ENCODE measurements at regions of chr16 and their contacts with region 1.

Region 1: DNA sequence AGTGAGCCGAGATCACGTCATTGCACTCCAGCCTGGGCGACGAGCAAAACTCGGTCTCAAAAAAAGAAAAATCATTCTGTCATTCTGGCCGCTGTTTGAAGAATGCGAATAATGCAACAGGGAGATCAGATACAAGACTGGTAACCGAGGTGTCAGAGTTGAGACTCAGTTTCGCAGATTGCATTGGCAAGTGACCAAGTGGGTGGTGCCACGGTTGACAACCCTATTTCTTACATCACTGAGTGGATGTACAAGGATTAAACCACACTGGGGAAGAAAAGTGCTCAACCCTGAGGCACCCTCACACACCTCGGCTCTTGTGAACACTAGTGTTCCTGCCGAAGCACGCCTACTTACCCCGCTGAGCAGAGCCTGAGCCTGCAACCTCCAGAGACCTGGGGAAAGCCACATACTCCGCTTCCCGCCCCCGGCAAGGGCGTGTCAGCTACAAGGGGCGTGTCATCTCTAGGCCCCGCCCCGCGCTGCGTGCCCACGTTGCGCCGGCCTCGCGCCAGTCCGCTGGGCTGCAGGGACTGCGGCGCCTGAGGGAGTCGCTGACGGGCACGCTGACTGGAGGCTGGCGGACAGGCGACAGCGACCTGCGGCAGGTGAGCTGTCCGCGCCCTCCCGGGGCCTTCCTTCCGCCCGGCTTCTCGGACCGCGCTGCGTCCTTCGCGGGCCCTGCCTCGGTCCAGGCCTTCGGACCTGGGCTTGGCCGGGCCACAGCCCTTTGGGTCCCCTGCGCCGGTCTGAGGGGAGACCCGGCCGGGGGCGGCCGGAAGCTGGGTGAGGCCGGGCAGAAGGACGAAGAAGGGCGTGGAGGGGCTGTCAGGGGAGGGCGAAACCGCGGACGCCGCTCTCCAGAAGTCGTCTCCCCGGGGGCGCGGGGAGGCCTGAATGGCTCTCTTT is at the start of gene HMOX2:
- DNase-seq: peak; percentile 96
- ATAC-seq: peak; percentile 85
- H3K4me3 Mint-ChIP-seq: peak within 1 kb of the TSS; percentile 88
- H3K27ac Mint-ChIP-seq: peak within 1 kb of the TSS; percentile 85
- H3K4me1 Mint-ChIP-seq: peaks cover 43% of the 10 kb centered on the region
- H3K27me3 Mint-ChIP-seq: no peaks in the 10 kb centered on the region
- total RNA-seq, gene HMOX2: 67.7 to 80.2 TPM

Region 2: DNA sequence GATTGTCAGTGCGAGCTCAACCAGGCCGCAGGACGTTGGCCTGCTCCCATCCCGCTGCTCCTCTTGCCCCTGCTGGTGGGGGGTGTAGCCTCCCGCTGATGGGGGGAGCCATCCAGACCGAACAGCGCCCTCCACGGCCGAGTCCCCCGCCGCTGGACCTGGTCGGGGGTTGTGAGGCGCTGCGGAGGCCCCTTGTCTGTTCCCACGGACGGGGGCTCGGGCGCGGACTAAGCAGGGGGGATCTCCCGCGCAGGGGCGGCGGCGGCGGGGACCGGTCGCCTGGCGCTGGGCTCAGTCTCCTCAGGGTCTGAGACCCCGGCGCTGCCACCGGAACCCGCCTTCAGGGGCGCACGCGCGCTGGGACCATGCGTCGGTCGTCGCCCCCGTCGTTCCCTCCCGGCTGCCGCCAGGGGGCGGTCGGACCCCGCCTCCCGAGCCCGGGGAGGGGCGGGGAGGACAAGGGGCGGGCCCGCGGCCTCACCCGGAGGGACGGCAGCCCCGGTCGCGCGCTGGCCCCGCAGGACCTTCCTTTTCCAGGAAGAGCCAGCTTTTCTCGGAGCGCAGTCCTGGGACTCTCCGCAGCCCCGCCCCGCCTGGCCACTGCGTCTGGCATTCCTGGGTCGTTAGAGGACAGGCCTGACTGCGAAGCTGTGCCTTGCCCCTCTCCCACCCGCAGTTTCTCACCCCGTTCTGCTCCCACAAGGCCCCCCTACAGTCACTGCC is 1417.0 kb before region 1 on chr16:
- CTCF ChIA-PET with region 1: no interaction called
- POLR2A ChIA-PET with region 1: no interaction called
- intact Hi-C with region 1: no loop called
- DNase-seq: peak; percentile 93
- ATAC-seq: peak; percentile 83
- H3K4me3 Mint-ChIP-seq: peak overlapping the region; percentile 84
- H3K27ac Mint-ChIP-seq: peak overlapping the region; percentile 93
- H3K4me1 Mint-ChIP-seq: peaks cover 62% of the 10 kb centered on the region
- H3K27me3 Mint-ChIP-seq: no peaks in the 10 kb centered on the region

Region 3: DNA sequence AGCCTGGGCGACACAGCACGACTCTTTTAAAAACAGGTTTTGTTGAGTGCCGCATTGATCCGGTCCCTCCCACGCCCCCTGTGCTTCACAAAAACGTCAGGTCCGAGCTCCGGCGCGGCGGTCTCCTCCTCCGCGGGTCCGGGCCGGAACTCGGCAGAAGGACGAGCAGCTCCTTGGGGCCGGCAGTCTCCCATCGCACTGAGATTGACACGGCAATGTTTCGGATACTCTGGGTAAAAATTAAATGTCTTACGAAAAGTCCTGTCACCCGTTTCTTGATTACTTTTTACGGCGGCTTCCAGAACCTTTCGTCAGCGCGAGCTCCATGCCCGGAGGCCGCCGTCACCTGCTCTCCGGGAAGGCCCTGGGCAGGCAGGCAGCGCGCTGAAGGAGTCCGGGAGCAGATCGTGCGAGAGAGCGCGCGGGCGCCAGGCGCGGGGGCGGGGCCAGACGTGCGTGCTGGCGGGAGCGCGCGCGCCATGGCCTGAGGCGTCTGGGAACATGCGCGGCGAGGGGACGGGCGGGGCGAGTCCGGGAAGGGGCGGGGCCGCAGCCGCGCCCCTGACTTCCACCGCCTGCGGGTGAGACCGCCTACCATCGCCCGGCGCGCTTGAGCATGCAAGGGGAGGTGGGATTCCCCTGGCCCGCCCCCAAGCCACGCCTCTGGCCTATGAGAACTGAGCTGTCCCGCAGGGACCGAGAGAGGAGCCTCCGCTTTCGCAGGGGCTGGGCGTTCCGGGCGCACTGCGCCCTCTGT is 222.6 kb before region 1 on chr16:
- CTCF ChIA-PET with region 1: interaction called, 3 read pairs
- POLR2A ChIA-PET with region 1: no interaction called
- intact Hi-C with region 1: loop called in 1 of 2 experiments (anchors 2 kb)
- DNase-seq: peak; percentile 100
- ATAC-seq: peak; percentile 98
- H3K4me3 Mint-ChIP-seq: peak overlapping the region; percentile 92
- H3K27ac Mint-ChIP-seq: peak overlapping the region; percentile 96
- H3K4me1 Mint-ChIP-seq: peaks cover 3% of the 10 kb centered on the region
- H3K27me3 Mint-ChIP-seq: no peaks in the 10 kb centered on the region

Region 4: GRCh38 chr16:4339909-4340308 is 136.2 kb before region 1 on chr16:
- CTCF ChIA-PET with region 1: no interaction called
- POLR2A ChIA-PET with region 1: no interaction called
- intact Hi-C with region 1: no loop called
- DNase-seq: no peak
- ATAC-seq: no peak
- H3K4me3 Mint-ChIP-seq: no peak overlapping the region
- H3K27ac Mint-ChIP-seq: no peak overlapping the region
- H3K4me1 Mint-ChIP-seq: no peaks in the 10 kb centered on the region
- H3K27me3 Mint-ChIP-seq: no peaks in the 10 kb centered on the region

Region 5: GRCh38 chr16:4416200-4417032 is 59.7 kb before region 1 on chr16 and contains the start of gene CORO7:
- CTCF ChIA-PET with region 1: interaction called, 6 read pairs
- POLR2A ChIA-PET with region 1: interaction called, 6 read pairs
- intact Hi-C with region 1: loop called (anchors 1 to 2 kb)
- DNase-seq: peak; percentile 98
- ATAC-seq: peak; percentile 81
- H3K4me3 Mint-ChIP-seq: peak within 1 kb of the TSS; percentile 86
- H3K27ac Mint-ChIP-seq: peak within 1 kb of the TSS; percentile 84
- H3K4me1 Mint-ChIP-seq: peaks cover 29% of the 10 kb centered on the region
- H3K27me3 Mint-ChIP-seq: no peaks in the 10 kb centered on the region
- total RNA-seq, gene CORO7: 65.0 to 67.1 TPM

Region 6: DNA sequence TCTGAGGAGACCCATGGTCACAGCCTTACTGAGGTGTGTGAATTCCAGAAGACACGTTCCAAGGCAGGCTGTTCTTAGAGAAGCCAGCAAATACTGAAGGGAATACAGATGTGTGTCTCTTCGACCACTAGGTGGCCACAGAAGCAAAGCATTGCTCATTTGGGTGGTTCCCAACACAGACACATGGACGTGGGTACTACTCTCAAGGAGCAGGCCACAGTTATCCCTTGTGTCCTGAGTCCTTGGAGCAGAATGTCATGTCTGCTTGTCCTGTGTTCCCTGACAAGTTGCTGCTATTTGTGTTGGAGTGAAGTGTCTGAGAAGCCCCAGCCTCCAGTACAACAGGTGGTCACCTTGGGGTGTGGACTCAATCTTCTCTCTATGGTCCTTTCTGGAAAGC is 30.3 kb after region 1 on chr16:
- CTCF ChIA-PET with region 1: interaction called, 19 read pairs
- POLR2A ChIA-PET with region 1: interaction called, 5 read pairs
- intact Hi-C with region 1: no loop called
- DNase-seq: peak; percentile 75
- ATAC-seq: peak; percentile 72
- H3K4me3 Mint-ChIP-seq: no peak overlapping the region
- H3K27ac Mint-ChIP-seq: peak overlapping the region; percentile 81
- H3K4me1 Mint-ChIP-seq: peaks cover 48% of the 10 kb centered on the region
- H3K27me3 Mint-ChIP-seq: no peaks in the 10 kb centered on the region

Region 7: GRCh38 chr16:4616047-4616811 is 140.1 kb after region 1 on chr16:
- CTCF ChIA-PET with region 1: interaction called, 3 read pairs
- POLR2A ChIA-PET with region 1: interaction called, 3 read pairs
- intact Hi-C with region 1: loop called in 1 of 2 experiments (anchors 1 kb)
- DNase-seq: peak; percentile 100
- ATAC-seq: peak; percentile 89
- H3K4me3 Mint-ChIP-seq: peak overlapping the region; percentile 86
- H3K27ac Mint-ChIP-seq: peak overlapping the region; percentile 95
- H3K4me1 Mint-ChIP-seq: peaks cover 17% of the 10 kb centered on the region
- H3K27me3 Mint-ChIP-seq: no peaks in the 10 kb centered on the region

Region 8: DNA sequence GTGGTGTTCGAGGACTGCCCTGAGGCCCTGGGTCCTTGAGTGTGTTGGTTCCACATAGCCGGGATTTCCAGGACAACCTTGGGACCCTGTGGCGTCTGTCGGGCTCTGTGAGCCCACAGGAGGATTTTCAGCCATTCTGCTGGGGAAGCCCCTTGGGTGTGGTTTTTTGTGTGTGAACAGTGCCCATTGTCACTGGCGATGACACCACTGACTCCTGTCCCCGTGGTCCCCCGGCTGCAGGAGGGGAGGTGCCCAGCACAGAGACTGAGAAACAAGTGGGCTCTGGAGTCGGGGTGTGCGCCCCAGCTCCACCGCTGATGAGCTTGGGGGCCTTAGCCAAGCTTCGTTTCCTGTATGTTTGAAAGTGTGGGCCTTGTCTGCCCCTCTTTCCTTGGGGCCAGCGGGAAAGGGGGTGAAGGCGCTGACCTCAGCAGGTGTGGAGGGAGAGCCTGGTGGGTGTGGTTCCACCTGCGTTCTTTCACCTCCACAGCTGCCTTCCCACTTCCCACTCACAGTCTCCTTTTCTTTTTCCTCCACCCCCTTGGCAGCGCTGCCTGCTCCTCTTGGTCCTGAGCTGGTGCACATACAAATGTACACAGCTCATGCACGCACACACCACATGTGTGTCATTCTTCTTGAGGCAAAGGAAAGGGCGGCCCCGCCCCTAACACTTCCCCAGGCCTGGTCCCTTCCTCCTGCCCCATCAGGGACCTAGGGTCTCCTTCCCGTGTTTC is 164.6 kb after region 1 on chr16:
- CTCF ChIA-PET with region 1: no interaction called
- POLR2A ChIA-PET with region 1: no interaction called
- intact Hi-C with region 1: no loop called
- DNase-seq: no peak
- ATAC-seq: peak; percentile 26
- H3K4me3 Mint-ChIP-seq: no peak overlapping the region
- H3K27ac Mint-ChIP-seq: no peak overlapping the region
- H3K4me1 Mint-ChIP-seq: peaks cover 22% of the 10 kb centered on the region
- H3K27me3 Mint-ChIP-seq: no peaks in the 10 kb centered on the region

Region 9: DNA sequence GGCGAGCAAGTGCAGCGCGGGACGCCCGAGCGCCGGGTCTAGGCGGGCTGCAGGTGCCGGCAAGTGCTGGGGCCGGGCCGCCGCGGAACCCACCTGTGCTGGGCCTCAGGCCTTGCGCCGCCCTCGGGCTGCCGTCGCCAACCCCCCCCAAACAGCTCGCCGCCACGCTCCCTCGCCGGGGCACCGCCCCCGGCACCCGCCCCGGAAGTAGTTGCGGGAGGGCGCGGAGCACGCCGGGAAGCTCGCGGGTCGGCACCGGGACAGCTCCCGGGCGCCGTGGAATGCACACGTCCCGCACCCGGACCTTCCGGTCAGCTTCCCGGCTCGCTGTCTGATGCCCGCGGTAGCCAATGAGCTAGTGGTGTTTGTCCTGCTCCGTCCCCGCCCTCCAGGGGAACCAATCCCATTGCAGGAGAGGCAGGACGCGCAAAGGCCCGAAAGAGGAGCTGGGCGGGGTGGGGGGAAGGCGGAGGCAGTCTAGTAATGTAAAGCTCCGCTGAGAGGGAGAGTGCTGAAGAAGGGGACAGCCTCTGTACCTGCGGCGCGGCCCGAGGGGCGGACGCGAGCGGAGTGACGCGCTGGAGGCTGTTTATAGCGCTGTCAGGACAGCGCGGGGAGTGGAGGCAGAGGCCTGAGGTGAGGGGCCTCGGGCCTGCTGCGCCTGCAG is 258.1 kb after region 1 on chr16 and contains the starts of genes ANKS3 and DNAAF8:
- CTCF ChIA-PET with region 1: no interaction called
- POLR2A ChIA-PET with region 1: no interaction called
- intact Hi-C with region 1: loop called in 1 of 2 experiments (anchors 1 kb)
- DNase-seq: peak; percentile 88
- ATAC-seq: peak; percentile 82
- H3K4me3 Mint-ChIP-seq: peak within 1 kb of the TSS; percentile 86
- H3K27ac Mint-ChIP-seq: peak within 1 kb of the TSS; percentile 58
- H3K4me1 Mint-ChIP-seq: peaks cover 13% of the 10 kb centered on the region
- H3K27me3 Mint-ChIP-seq: no peaks in the 10 kb centered on the region
- total RNA-seq, gene ANKS3: 12.1 to 14.1 TPM
- total RNA-seq, gene DNAAF8: 0.11 to 0.16 TPM

Region 10: DNA sequence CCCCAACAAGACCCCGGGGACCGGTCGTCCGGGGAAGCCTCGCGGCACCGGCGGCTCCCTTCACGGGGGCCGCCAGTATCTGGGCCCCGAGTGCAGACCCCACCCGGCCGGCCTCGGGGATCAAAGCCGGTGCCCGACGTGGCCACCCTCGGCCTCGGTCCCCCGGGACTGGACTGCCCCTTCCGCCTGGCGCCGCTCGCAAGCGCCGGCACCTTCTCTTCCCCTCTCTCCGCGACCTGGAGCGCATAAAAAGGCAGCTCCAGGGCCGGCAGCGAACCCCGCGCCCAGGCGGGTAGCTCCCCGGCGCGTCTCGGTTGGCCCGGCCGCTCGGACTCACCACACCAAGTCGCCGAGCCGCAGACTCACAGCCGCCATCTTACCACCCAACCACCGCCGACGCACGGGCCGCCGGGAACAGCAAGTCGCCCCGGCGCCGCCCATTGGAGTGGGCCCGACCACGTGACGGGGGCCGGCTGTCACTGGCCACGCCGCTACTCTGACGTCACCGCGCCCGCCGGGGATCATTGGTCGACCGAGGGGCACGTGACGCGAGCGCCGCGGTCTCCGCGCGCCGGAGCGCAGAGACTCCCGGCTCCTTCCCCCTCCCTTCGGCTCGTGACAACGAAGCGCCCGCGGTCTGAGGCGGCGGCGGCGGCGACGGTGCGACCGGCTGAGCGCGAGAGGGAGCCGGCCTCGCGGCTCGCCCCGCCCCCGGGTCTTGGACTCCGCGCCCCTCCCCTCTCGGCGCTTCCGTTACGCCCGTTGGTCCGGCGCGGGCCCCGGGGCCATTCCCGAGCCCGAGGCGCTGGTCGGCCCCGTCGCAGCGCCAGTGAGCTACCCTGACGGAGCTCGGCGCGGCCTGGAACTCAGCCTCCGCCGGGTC is 371.0 kb after region 1 on chr16 and contains the starts of genes GLYR1 and UBN1:
- CTCF ChIA-PET with region 1: no interaction called
- POLR2A ChIA-PET with region 1: no interaction called
- intact Hi-C with region 1: loop called in 1 of 2 experiments (anchors 2 kb)
- DNase-seq: peak; percentile 100
- ATAC-seq: peak; percentile 96
- H3K4me3 Mint-ChIP-seq: peak within 1 kb of the TSS; percentile 77
- H3K27ac Mint-ChIP-seq: peak within 1 kb of the TSS; percentile 84
- H3K4me1 Mint-ChIP-seq: peaks cover 54% of the 10 kb centered on the region
- H3K27me3 Mint-ChIP-seq: no peaks in the 10 kb centered on the region
- total RNA-seq, gene GLYR1: 76.9 to 78.4 TPM
- total RNA-seq, gene UBN1: 19.3 to 23.0 TPM

Measured in activated CD4-positive, alpha-beta T cell treated with anti-CD3 and anti-CD28 coated beads for 36 hours (primary cell).